ENCODE measurements at regions of chr14 and their contacts with region 1.

Region 1: DNA sequence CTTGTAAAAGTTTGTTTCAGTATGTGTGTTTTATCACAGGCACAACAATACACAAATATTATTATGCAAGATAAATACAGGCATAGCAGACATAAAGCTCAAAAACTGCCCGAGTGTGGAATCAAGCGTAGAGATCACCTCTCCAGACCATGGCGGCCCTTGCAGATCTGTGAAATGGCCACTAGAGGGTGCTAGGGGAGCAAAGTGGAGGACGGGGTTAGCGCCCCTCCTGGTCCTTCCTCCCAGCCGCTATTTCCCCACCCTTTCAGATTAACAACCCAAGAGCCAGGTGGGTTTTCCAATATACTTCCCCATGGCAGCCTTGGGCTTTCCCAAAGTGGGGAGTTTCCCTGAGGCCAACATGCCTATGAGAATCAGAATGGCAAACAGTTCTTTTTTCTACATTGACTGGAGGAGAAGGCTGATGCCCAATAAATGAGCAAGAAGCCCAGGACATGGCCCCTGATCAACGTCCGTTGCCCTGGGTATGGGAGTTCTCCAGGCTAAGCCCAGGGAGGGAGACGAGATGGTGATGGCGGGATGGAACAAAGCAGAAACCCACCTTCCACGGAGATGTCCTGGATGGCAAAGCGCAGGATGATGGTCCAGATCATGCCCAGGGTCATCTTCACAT is 67.4 kb downstream of the ACTN1 start:
- DNase-seq: peak; percentile 69 to 90 (median 78)
- ATAC-seq: peak; percentile 99
- H3K4me3 ChIP-seq: no peak overlapping the region
- H3K4me3 Mint-ChIP-seq: no peak overlapping the region
- H3K27ac ChIP-seq: no peak overlapping the region
- H3K27ac Mint-ChIP-seq: peak overlapping the region; percentile 45
- H3K4me1 ChIP-seq: peaks cover 9% of the 10 kb centered on the region
- H3K4me1 Mint-ChIP-seq: peaks cover 23% of the 10 kb centered on the region
- H3K27me3 ChIP-seq: no peaks in the 10 kb centered on the region
- H3K27me3 Mint-ChIP-seq: no peaks in the 10 kb centered on the region
- CTCF ChIP-seq: peak; percentile 99

Region 2: DNA sequence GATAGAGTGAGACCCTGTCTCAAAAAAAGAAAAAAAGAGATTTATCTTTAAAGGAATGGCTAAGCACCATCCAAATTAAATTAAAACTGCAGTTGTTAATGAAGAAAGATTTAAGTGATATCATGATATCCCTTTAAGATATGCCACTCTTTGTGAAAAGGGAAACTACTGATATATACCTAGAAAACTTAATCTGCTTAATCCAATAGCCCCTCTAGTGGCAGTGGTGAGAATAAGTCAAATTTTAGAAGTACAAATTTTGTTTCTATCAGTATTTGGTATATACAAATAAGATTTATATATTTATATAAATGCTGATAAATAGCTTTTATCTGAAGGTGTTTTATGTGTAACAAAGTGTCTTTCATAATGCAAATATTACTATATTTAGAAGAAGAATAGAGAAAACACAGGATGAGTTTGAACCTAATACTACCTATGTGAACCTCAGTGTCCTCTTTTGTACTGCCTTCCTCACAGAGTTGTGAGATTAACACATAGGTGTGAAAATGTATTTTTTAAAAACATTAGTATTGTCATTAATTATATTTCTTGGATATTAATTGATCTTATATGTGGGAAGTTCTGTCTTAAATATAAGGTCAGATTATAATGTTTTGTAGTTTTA is 1773.9 kb before region 1 on chr14:
- CTCF ChIA-PET with region 1: no interaction called
- POLR2A ChIA-PET with region 1: no interaction called
- intact Hi-C with region 1: no loop called
- DNase-seq: peak in 1 of 14 experiments; percentile 3
- ATAC-seq: no peak
- H3K4me3 ChIP-seq: no peak overlapping the region
- H3K4me3 Mint-ChIP-seq: no peak overlapping the region
- H3K27ac ChIP-seq: no peak overlapping the region
- H3K27ac Mint-ChIP-seq: no peak overlapping the region
- H3K4me1 ChIP-seq: no peaks in the 10 kb centered on the region
- H3K4me1 Mint-ChIP-seq: no peaks in the 10 kb centered on the region
- H3K27me3 ChIP-seq: no peaks in the 10 kb centered on the region
- H3K27me3 Mint-ChIP-seq: no peaks in the 10 kb centered on the region
- CTCF ChIP-seq: peak; percentile 19

Region 3: GRCh38 chr14:68757618-68758081 is 154.1 kb before region 1 on chr14:
- CTCF ChIA-PET with region 1: no interaction called
- POLR2A ChIA-PET with region 1: no interaction called
- intact Hi-C with region 1: no loop called
- DNase-seq: peak in 2 of 14 experiments; percentile 56 to 71
- ATAC-seq: peak; percentile 41
- H3K4me3 ChIP-seq: no peak overlapping the region
- H3K4me3 Mint-ChIP-seq: no peak overlapping the region
- H3K27ac ChIP-seq: no peak overlapping the region
- H3K27ac Mint-ChIP-seq: no peak overlapping the region
- H3K4me1 ChIP-seq: peaks cover 20% of the 10 kb centered on the region
- H3K4me1 Mint-ChIP-seq: peaks cover 29% of the 10 kb centered on the region
- H3K27me3 ChIP-seq: no peaks in the 10 kb centered on the region
- H3K27me3 Mint-ChIP-seq: no peaks in the 10 kb centered on the region
- CTCF ChIP-seq: no peak

Region 4: DNA sequence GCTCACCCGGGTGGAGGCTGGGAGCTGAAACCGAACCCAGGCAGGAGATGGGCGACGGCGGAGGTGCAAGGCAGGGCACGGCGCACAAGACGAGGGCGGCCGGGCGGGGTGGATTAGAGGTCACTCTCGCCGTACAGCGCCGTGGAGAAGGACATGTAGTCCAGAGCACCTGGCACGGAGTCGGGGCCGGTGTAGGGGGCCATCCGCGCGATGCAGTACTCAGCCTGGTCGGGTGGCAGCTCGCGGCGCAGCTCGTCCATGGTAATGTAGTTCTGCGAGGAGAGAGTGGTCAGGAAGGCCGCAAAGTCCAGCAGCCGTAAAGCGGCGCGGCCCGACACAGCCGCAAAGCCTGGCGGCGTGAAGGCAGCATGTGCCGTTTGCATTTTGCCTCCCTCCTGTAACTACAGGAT is 37.0 kb before region 1 on chr14:
- CTCF ChIA-PET with region 1: no interaction called
- POLR2A ChIA-PET with region 1: no interaction called
- intact Hi-C with region 1: no loop called
- DNase-seq: peak in 4 of 14 experiments; percentile 20 to 36 (median 24)
- ATAC-seq: peak; percentile 26
- H3K4me3 ChIP-seq: peak overlapping the region; percentile 24
- H3K4me3 Mint-ChIP-seq: no peak overlapping the region
- H3K27ac ChIP-seq: no peak overlapping the region
- H3K27ac Mint-ChIP-seq: no peak overlapping the region
- H3K4me1 ChIP-seq: no peaks in the 10 kb centered on the region
- H3K4me1 Mint-ChIP-seq: no peaks in the 10 kb centered on the region
- H3K27me3 ChIP-seq: no peaks in the 10 kb centered on the region
- H3K27me3 Mint-ChIP-seq: no peaks in the 10 kb centered on the region
- CTCF ChIP-seq: no peak

Region 5: DNA sequence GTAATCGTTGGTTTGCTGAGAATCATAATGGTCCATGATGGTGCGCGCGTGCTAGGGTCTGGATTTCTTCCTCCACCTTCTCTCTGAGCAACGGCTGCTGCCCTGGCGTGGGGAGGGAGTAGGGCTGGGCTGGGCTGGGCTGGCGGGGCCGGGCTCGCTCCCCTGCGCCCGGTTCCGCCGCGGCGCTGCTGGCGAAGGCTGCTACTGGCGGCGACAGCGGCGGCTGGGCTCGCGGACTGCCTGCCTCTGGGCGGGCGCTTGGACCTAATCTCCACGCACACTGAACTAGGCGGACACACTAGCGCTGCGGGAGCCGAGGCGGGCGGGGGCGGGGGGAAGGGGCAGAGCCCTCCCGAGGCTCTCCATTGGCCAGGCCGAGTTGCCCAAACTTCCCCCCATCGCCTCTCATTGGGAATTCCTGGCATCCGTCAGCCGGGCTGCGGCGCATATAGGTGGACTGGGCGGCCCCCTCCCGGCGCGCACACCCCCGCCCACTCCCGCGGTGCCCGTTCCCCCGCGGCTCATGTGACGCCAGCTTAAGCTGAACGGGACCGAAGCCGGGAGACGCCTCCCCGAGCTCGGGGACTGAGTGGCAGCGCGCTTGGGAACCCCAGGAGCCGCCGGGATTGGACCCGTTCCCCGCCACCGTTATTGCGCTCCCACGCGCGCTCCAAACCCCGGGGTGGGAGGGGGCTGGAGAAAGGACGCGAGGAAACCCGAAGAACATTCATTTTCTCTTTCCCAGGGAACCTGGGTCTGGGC is 67.5 kb after region 1 on chr14 and contains the start of gene ACTN1:
- CTCF ChIA-PET with region 1: interaction called, 3 read pairs
- POLR2A ChIA-PET with region 1: interaction called, 4 read pairs
- intact Hi-C with region 1: loop called (anchors 1 kb)
- DNase-seq: peak in 13 of 14 experiments; percentile 31 to 88 (median 57)
- ATAC-seq: peak; percentile 56
- H3K4me3 ChIP-seq: peak within 1 kb of the TSS; percentile 93
- H3K4me3 Mint-ChIP-seq: peak within 1 kb of the TSS; percentile 99
- H3K27ac ChIP-seq: peak within 1 kb of the TSS; percentile 22 to 78
- H3K27ac Mint-ChIP-seq: peak within 1 kb of the TSS; percentile 97
- H3K4me1 ChIP-seq: peaks cover 47% of the 10 kb centered on the region
- H3K4me1 Mint-ChIP-seq: peaks cover 51% of the 10 kb centered on the region
- H3K27me3 ChIP-seq: no peaks in the 10 kb centered on the region
- H3K27me3 Mint-ChIP-seq: no peaks in the 10 kb centered on the region
- CTCF ChIP-seq: no peak
- total RNA-seq, gene ACTN1: 128 to 143 TPM

Region 6: GRCh38 chr14:69002069-69002468 is 90.4 kb after region 1 on chr14:
- CTCF ChIA-PET with region 1: interaction called, 10 read pairs
- POLR2A ChIA-PET with region 1: interaction called, 4 read pairs
- intact Hi-C with region 1: loop called (anchors 2 to 5 kb)
- DNase-seq: peak in 4 of 14 experiments; percentile 23 to 48 (median 38)
- ATAC-seq: no peak
- H3K4me3 ChIP-seq: no peak overlapping the region
- H3K4me3 Mint-ChIP-seq: no peak overlapping the region
- H3K27ac ChIP-seq: no peak overlapping the region
- H3K27ac Mint-ChIP-seq: no peak overlapping the region
- H3K4me1 ChIP-seq: peaks cover 5% of the 10 kb centered on the region
- H3K4me1 Mint-ChIP-seq: no peaks in the 10 kb centered on the region
- H3K27me3 ChIP-seq: no peaks in the 10 kb centered on the region
- H3K27me3 Mint-ChIP-seq: no peaks in the 10 kb centered on the region
- CTCF ChIP-seq: no peak

Region 7: GRCh38 chr14:69055999-69056788 is 144.5 kb after region 1 on chr14:
- CTCF ChIA-PET with region 1: interaction called, 3 read pairs
- POLR2A ChIA-PET with region 1: no interaction called
- intact Hi-C with region 1: loop called (anchors 1 to 5 kb)
- DNase-seq: peak in 3 of 14 experiments; percentile 16 to 45 (median 34)
- ATAC-seq: peak; percentile 86
- H3K4me3 ChIP-seq: no peak overlapping the region
- H3K4me3 Mint-ChIP-seq: no peak overlapping the region
- H3K27ac ChIP-seq: no peak overlapping the region
- H3K27ac Mint-ChIP-seq: peak overlapping the region; percentile 54
- H3K4me1 ChIP-seq: no peaks in the 10 kb centered on the region
- H3K4me1 Mint-ChIP-seq: peaks cover 8% of the 10 kb centered on the region
- H3K27me3 ChIP-seq: no peaks in the 10 kb centered on the region
- H3K27me3 Mint-ChIP-seq: no peaks in the 10 kb centered on the region
- CTCF ChIP-seq: no peak

Region 8: DNA sequence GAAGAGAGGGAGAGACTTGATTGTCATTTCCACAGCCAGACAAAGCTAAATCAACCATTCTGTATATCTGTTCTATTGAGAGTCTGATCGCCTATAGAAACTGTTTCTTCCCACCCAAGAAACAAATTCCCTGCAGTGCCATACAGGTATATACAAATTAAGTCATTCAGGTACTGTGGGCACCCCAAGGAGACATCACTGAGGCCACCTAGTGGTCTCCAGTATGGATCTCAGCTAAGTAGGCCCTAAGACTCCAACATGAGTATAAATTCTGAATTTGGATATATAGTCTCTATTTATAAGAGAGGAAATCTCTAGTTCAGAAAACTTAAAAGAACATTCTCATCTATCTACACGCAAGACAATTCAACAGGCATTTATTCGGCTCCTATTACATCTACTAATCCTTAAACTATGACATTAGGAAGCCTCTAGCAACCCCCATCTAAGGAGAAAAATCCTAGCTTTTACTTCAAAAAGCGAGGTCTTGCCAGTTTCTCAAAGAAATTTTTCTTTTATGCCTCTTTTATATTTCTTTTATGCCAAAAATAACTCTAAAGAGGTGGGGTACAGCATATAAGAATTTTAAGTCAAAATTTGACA is 178.6 kb after region 1 on chr14:
- CTCF ChIA-PET with region 1: interaction called, 8 read pairs
- POLR2A ChIA-PET with region 1: no interaction called
- intact Hi-C with region 1: loop called (anchors 1 to 2 kb)
- DNase-seq: peak in 12 of 14 experiments; percentile 2 to 64 (median 14)
- ATAC-seq: peak; percentile 79
- H3K4me3 ChIP-seq: no peak overlapping the region
- H3K4me3 Mint-ChIP-seq: no peak overlapping the region
- H3K27ac ChIP-seq: no peak overlapping the region
- H3K27ac Mint-ChIP-seq: no peak overlapping the region
- H3K4me1 ChIP-seq: no peaks in the 10 kb centered on the region
- H3K4me1 Mint-ChIP-seq: peaks cover 10% of the 10 kb centered on the region
- H3K27me3 ChIP-seq: no peaks in the 10 kb centered on the region
- H3K27me3 Mint-ChIP-seq: no peaks in the 10 kb centered on the region
- CTCF ChIP-seq: peak; percentile 66

Region 9: DNA sequence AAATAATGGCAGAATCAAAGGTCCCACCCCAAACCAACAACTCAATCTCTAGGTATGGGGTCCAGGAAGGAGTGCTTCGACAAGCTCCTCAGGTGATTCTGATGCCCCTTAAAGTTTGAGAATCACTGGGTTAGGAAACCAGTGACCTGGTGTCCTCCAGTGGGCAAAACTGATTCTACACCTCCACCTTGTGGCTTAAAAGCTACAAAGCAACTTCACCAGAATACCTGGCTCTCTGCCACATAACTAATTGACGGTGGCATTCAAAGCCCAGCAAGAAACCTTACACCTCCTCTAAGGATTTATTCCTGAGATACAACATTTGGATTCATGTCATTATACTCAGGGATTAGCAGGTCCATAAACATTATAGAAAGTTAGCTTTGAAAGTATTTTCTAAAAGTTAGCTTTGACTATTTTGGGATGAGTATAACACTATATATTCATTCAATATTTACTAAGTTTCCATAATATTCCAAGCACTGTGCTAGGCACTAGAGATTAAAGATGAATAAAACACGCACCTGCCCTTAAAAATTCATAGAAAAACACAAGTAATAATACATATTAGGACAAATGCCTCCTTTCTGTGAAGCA is 195.8 kb after region 1 on chr14:
- CTCF ChIA-PET with region 1: interaction called, 5 read pairs
- POLR2A ChIA-PET with region 1: interaction called, 3 read pairs
- intact Hi-C with region 1: loop called (anchors 1 kb)
- DNase-seq: peak in 7 of 14 experiments; percentile 1 to 69 (median 41)
- ATAC-seq: peak; percentile 60
- H3K4me3 ChIP-seq: no peak overlapping the region
- H3K4me3 Mint-ChIP-seq: no peak overlapping the region
- H3K27ac ChIP-seq: no peak overlapping the region
- H3K27ac Mint-ChIP-seq: peak overlapping the region; percentile 55
- H3K4me1 ChIP-seq: no peaks in the 10 kb centered on the region
- H3K4me1 Mint-ChIP-seq: peaks cover 13% of the 10 kb centered on the region
- H3K27me3 ChIP-seq: no peaks in the 10 kb centered on the region
- H3K27me3 Mint-ChIP-seq: no peaks in the 10 kb centered on the region
- CTCF ChIP-seq: peak; percentile 61